Naive thymus-derived CD4-positive, alpha-beta T cell (primary cell): ENCODE measurements at regions of chr12 and their contacts with region 1.

Region 1: DNA sequence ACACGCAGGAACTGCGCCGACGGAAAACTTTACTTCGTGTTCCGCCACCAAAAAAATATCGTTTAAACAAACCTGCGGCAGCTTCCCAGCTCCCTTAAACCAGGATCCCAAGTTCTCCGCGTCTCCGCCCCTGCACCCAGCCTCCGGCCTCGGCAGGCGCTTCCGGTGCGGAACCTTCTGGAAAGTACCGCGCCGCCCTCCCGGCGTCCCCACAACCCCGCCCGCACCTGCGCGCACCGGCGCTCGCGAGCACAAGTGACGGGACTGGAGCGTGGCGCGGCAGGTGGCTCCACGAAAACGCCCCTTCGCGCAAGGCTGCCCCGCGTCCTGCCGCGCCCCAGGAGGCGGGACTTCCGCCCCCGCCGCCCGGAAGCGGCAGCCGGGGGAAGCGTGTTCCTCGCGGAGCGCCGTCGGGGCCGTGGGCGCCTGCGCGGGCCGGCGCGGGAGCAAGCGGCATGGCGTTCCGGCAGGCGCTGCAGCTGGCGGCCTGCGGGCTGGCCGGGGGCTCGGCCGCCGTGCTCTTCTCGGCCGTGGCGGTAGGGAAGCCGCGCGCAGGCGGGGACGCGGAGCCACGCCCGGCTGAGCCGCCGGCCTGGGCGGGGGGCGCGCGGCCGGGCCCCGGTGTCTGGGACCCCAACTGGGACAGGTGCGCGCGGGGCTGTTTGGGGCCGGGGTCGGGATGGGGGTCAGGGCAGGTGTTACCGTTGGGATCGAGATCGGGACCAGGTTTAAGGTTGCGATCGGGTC is at the start of gene PGAM5:
- DNase-seq: peak; percentile 91 to 97 (median 95)
- ATAC-seq: peak; percentile 98
- H3K4me3 ChIP-seq: peak within 1 kb of the TSS; percentile 62
- H3K4me3 Mint-ChIP-seq: peak within 1 kb of the TSS; percentile 84 to 98 (median 88)
- H3K27ac ChIP-seq: peak within 1 kb of the TSS; percentile 92
- H3K27ac Mint-ChIP-seq: peak within 1 kb of the TSS; percentile 87 to 96 (median 92)
- H3K4me1 ChIP-seq: peaks cover 6 to 11% of the 10 kb centered on the region in 2 donors
- H3K4me1 Mint-ChIP-seq: peaks cover 0 to 36% (median 22%) of the 10 kb centered on the region in 7 donors
- H3K27me3 ChIP-seq: no peaks in the 10 kb centered on the region
- H3K27me3 Mint-ChIP-seq: no peaks in the 10 kb centered on the region
- total RNA-seq, gene PGAM5: 19.3 to 51.7 (median 21.4) TPM

Region 2: GRCh38 chr12:132687208-132688164 is 23.1 kb before region 1 on chr12 and contains the starts of genes POLE and PXMP2:
- CTCF ChIA-PET with region 1: no interaction called
- POLR2A ChIA-PET with region 1: interaction called, 3 read pairs
- intact Hi-C with region 1: loop called (anchors 1 kb)
- DNase-seq: peak; percentile 85 to 94 (median 89)
- ATAC-seq: peak; percentile 98
- H3K4me3 ChIP-seq: peak within 1 kb of the TSS; percentile 47
- H3K4me3 Mint-ChIP-seq: peak within 1 kb of the TSS; percentile 65 to 89 (median 84)
- H3K27ac ChIP-seq: peak within 1 kb of the TSS; percentile 58
- H3K27ac Mint-ChIP-seq: peak within 1 kb of the TSS in 3 of 9 donors; percentile 45 to 92 (median 87)
- H3K4me1 ChIP-seq: peaks cover 4 to 14% of the 10 kb centered on the region in 2 donors
- H3K4me1 Mint-ChIP-seq: peaks cover 0 to 31% (median 22%) of the 10 kb centered on the region in 7 donors
- H3K27me3 ChIP-seq: no peaks in the 10 kb centered on the region
- H3K27me3 Mint-ChIP-seq: no peaks in the 10 kb centered on the region
- total RNA-seq, gene POLE: 54.5 to 138 (median 62.1) TPM
- total RNA-seq, gene PXMP2: 2.6 to 26.8 (median 5.4) TPM

Region 3: GRCh38 chr12:132771126-132771838 is 60.7 kb after region 1 on chr12:
- CTCF ChIA-PET with region 1: no interaction called
- POLR2A ChIA-PET with region 1: interaction called, 3 read pairs
- intact Hi-C with region 1: loop called in 1 of 2 experiments (anchors 2 kb)
- DNase-seq: peak in 8 of 9 donors; percentile 38 to 82 (median 76)
- ATAC-seq: peak; percentile 80
- H3K4me3 ChIP-seq: no peak overlapping the region
- H3K4me3 Mint-ChIP-seq: peak overlapping the region; percentile 66 to 82 (median 73)
- H3K27ac ChIP-seq: peak overlapping the region; percentile 69
- H3K27ac Mint-ChIP-seq: peak overlapping the region; percentile 62 to 93 (median 84)
- H3K4me1 ChIP-seq: peaks cover 4 to 68% of the 10 kb centered on the region in 2 donors
- H3K4me1 Mint-ChIP-seq: peaks cover 29 to 89% (median 73%) of the 10 kb centered on the region in 7 donors
- H3K27me3 ChIP-seq: no peaks in the 10 kb centered on the region
- H3K27me3 Mint-ChIP-seq: no peaks in the 10 kb centered on the region

Region 4: DNA sequence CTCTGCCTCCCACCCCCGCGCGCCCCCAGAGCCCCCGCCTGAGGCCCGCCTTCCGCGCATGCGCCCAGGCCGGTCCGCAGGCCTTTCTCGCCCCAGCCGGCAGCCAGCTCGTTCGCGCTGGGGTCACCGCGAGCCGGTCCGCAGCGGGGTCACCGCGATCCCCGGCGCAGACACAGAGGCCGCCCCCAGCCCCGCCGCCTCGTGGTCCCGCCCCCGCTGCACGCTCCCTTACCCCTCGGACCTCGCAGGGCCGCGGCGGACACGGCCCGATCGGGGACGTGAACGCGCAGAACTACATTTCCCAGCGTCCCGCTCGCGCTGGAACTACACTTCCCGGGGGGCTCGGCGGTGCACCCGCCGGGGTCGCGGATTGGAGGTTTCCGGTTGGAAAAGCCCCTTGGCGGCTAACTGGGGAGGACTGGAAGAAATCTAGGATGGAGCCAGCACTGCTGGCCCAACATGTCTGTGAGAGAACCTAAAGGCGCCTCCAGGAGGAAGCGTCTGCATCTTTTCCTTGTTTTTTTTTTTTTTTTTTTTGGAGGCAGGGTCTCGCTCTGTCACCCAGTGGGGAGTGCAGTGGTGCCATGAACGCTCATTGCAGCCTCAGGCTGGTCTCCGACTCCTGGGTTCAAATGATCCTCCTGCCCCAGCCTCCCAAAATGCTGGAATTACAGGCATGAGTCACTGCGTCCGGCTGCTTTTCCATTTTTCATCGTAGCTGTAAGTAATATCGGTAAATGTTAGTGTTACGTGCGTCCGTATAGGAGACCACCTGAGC is 245.6 kb after region 1 on chr12 and contains the start of gene ZNF605:
- CTCF ChIA-PET with region 1: interaction called, 3 read pairs
- POLR2A ChIA-PET with region 1: no interaction called
- intact Hi-C with region 1: loop called in 1 of 2 experiments (anchors 5 kb)
- DNase-seq: peak; percentile 72 to 89 (median 80)
- ATAC-seq: peak; percentile 96
- H3K4me3 ChIP-seq: peak within 1 kb of the TSS; percentile 100
- H3K4me3 Mint-ChIP-seq: peak within 1 kb of the TSS; percentile 90 to 97 (median 95)
- H3K27ac ChIP-seq: peak within 1 kb of the TSS; percentile 85
- H3K27ac Mint-ChIP-seq: peak within 1 kb of the TSS; percentile 83 to 96 (median 91)
- H3K4me1 ChIP-seq: peaks cover 6 to 7% of the 10 kb centered on the region in 2 donors
- H3K4me1 Mint-ChIP-seq: peaks cover 19 to 53% (median 37%) of the 10 kb centered on the region in 7 donors
- H3K27me3 ChIP-seq: no peaks in the 10 kb centered on the region
- H3K27me3 Mint-ChIP-seq: no peaks in the 10 kb centered on the region
- total RNA-seq, gene ZNF605: 5.4 to 17.8 (median 11.8) TPM

Region 5: GRCh38 chr12:133037207-133038005 is 326.8 kb after region 1 on chr12 and contains the start of gene ZNF84:
- CTCF ChIA-PET with region 1: no interaction called
- POLR2A ChIA-PET with region 1: no interaction called
- intact Hi-C with region 1: loop called in 1 of 2 experiments (anchors 1 kb)
- DNase-seq: peak; percentile 93 to 99 (median 97)
- ATAC-seq: peak; percentile 96
- H3K4me3 ChIP-seq: peak within 1 kb of the TSS; percentile 65
- H3K4me3 Mint-ChIP-seq: peak within 1 kb of the TSS; percentile 78 to 96 (median 94)
- H3K27ac ChIP-seq: peak within 1 kb of the TSS; percentile 94
- H3K27ac Mint-ChIP-seq: peak within 1 kb of the TSS; percentile 87 to 99 (median 94)
- H3K4me1 ChIP-seq: peaks cover 0 to 4% of the 10 kb centered on the region in 2 donors
- H3K4me1 Mint-ChIP-seq: peaks cover 0 to 37% (median 13%) of the 10 kb centered on the region in 7 donors
- H3K27me3 ChIP-seq: no peaks in the 10 kb centered on the region
- H3K27me3 Mint-ChIP-seq: peaks cover 0 to 9% (median 3%) of the 10 kb centered on the region in 5 donors
- total RNA-seq, gene ZNF84: 27.4 to 52.7 (median 31.6) TPM